B cell (primary cell): ENCODE measurements at regions of chr15 and their contacts with region 1.

Region 1: DNA sequence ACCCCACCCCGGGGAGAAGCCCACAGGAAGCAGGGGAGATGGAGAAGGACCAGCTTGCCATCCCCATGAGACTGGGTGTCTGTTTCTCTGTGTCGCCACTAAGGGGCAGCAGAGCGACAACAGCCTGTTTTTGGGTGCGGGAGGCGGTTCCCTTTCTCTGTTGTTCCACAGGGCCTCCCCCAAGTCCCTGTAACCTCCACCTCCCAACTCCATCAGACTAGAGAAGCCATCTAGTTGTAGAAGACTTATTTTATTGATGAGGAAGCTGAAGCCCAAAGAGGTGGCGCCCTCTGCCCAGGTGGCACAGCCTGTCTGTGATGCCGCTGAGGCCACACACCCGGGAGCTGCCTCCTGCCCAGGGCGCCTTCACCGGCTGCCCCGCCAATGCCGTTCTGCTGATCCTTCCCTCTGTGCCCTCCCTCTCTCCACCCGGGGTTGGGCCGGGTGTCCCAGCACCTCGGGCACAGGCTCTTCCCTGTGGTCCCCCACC is 3.9 kb upstream of the CCDC9B start:
- DNase-seq: peak; percentile 77
- ATAC-seq: peak; percentile 88
- H3K4me3 ChIP-seq: no peak overlapping the region
- H3K4me3 Mint-ChIP-seq: no peak overlapping the region
- H3K27ac ChIP-seq: no peak overlapping the region
- H3K27ac Mint-ChIP-seq: no peak overlapping the region
- H3K4me1 ChIP-seq: no peaks in the 10 kb centered on the region
- H3K4me1 Mint-ChIP-seq: no peaks in the 10 kb centered on the region
- H3K27me3 ChIP-seq: no peaks in the 10 kb centered on the region
- H3K27me3 Mint-ChIP-seq: no peaks in the 10 kb centered on the region
- CTCF ChIP-seq: peak; percentile 83

Region 2: DNA sequence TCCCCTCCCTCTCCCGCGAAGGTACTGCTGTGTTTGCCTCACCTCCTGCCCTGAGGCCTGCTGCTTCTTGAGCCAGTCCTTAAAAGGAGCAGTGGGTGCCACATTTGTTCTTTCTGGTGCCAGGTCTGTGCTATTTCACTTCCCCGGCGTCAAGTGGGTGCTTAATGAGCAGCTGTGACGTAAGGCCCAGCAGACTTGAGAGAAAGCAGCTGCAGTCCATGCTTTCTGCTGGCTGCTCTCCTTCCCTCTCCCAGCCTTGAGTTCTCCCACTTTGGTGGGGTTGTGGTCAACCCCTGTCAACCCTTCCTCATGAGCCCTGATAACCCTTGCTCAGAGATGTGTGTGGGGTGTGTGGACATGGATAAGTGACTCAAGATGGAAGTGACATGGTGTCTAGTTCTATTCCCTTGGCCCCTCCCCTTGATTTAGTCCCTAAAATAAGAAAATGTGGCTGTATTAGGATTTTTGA is 14.3 kb before region 1 on chr15:
- CTCF ChIA-PET with region 1: interaction called, 134 read pairs
- POLR2A ChIA-PET with region 1: no interaction called
- intact Hi-C with region 1: no loop called
- DNase-seq: no peak
- ATAC-seq: no peak
- H3K4me3 ChIP-seq: no peak overlapping the region
- H3K4me3 Mint-ChIP-seq: no peak overlapping the region
- H3K27ac ChIP-seq: no peak overlapping the region
- H3K27ac Mint-ChIP-seq: no peak overlapping the region
- H3K4me1 ChIP-seq: peaks cover 21 to 22% of the 10 kb centered on the region in 2 donors
- H3K4me1 Mint-ChIP-seq: peaks cover 22% of the 10 kb centered on the region
- H3K27me3 ChIP-seq: no peaks in the 10 kb centered on the region
- H3K27me3 Mint-ChIP-seq: no peaks in the 10 kb centered on the region
- CTCF ChIP-seq: no peak

Region 3: GRCh38 chr15:40367686-40368611 is 23.3 kb after region 1 on chr15:
- CTCF ChIA-PET with region 1: interaction called, 34 read pairs
- POLR2A ChIA-PET with region 1: interaction called, 6 read pairs
- intact Hi-C with region 1: loop called (anchors 1 kb)
- DNase-seq: peak; percentile 94
- ATAC-seq: peak; percentile 92
- H3K4me3 ChIP-seq: peak overlapping the region; percentile 21 to 62 (median 57)
- H3K4me3 Mint-ChIP-seq: peak overlapping the region; percentile 86
- H3K27ac ChIP-seq: peak overlapping the region; percentile 26 to 43
- H3K27ac Mint-ChIP-seq: peak overlapping the region; percentile 83
- H3K4me1 ChIP-seq: peaks cover 14 to 26% of the 10 kb centered on the region in 2 donors
- H3K4me1 Mint-ChIP-seq: peaks cover 22% of the 10 kb centered on the region
- H3K27me3 ChIP-seq: no peaks in the 10 kb centered on the region
- H3K27me3 Mint-ChIP-seq: no peaks in the 10 kb centered on the region
- CTCF ChIP-seq: peak; percentile 94

Region 4: GRCh38 chr15:40372981-40373380 is 28.3 kb after region 1 on chr15:
- CTCF ChIA-PET with region 1: interaction called, 34 read pairs
- POLR2A ChIA-PET with region 1: no interaction called
- intact Hi-C with region 1: loop called (anchors 1 kb)
- DNase-seq: no peak
- ATAC-seq: no peak
- H3K4me3 ChIP-seq: no peak overlapping the region
- H3K4me3 Mint-ChIP-seq: no peak overlapping the region
- H3K27ac ChIP-seq: no peak overlapping the region
- H3K27ac Mint-ChIP-seq: no peak overlapping the region
- H3K4me1 ChIP-seq: peaks cover 3 to 5% of the 10 kb centered on the region in 2 donors
- H3K4me1 Mint-ChIP-seq: peaks cover 2% of the 10 kb centered on the region
- H3K27me3 ChIP-seq: no peaks in the 10 kb centered on the region
- H3K27me3 Mint-ChIP-seq: no peaks in the 10 kb centered on the region
- CTCF ChIP-seq: no peak